IMR-90 (cell line): ENCODE measurements at regions of chr4 and their contacts with region 1.

Region 1: GRCh38 chr4:38856524-38857337 is at the start of gene TLR6:
- DNase-seq: peak; percentile 68
- ATAC-seq: 0 out of 2 replicates have a peak, but pooled peaks have one; percentile 35
- H3K4me3 ChIP-seq: peak within 1 kb of the TSS; percentile 31; the same call in 1 of the 2 replicates
- H3K27ac ChIP-seq: peak within 1 kb of the TSS; percentile 92
- H3K4me1 ChIP-seq: peaks cover 6% of the 10 kb centered on the region
- H3K27me3 ChIP-seq: no peaks in the 10 kb centered on the region
- CTCF ChIP-seq: peak; percentile 68
- POLR2A ChIP-seq: no peak
- RAD21 ChIP-seq: peak; percentile 56
- total RNA-seq, gene TLR6: 3.9 and 4.4 TPM in 2 replicates

Region 2: DNA sequence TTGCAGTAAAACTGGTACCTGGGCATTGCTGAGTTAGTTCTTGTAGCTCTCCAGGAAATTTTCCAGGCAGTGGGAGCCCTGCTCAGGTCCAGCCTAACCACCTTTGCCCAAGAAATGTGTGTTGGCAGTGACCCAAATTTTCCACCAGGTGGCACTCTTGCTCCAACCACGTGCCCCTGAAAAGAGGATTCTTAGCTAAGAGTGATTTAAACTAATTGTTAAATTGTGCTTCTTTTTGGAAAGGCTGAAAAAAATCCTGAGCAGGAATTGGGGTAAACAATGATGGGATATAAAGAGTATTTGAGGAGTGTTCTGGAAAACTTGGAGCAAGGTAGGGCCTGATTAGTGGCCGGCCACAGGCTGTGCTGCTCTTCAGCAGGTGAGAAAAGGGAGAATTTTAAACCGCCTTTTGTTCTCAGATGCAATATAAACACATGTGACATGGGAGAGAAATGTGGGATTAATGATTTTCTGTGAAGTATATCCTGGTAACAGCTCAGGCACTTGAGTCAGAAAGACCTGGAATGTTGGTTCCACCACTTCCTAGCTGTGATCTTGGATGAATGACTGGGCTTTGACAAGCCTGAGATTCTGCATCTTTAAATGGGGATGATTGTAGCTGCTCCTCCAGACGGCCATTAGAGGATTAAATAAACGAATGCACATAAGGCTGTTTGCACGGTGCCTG is 676.9 kb before region 1 on chr4:
- CTCF ChIA-PET with region 1: no interaction called
- POLR2A ChIA-PET with region 1: no interaction called
- dilution Hi-C with region 1: no loop called
- in situ Hi-C with region 1: no loop called
- intact Hi-C with region 1: loop called (anchors 10 kb)
- DNase-seq: peak; percentile 77
- ATAC-seq: peak; percentile 90
- H3K4me3 ChIP-seq: no peak overlapping the region
- H3K27ac ChIP-seq: no peak overlapping the region
- H3K4me1 ChIP-seq: peaks cover 12% of the 10 kb centered on the region
- H3K27me3 ChIP-seq: no peaks in the 10 kb centered on the region
- CTCF ChIP-seq: peak; percentile 85
- POLR2A ChIP-seq: no peak
- RAD21 ChIP-seq: peak; percentile 92

Region 3: DNA sequence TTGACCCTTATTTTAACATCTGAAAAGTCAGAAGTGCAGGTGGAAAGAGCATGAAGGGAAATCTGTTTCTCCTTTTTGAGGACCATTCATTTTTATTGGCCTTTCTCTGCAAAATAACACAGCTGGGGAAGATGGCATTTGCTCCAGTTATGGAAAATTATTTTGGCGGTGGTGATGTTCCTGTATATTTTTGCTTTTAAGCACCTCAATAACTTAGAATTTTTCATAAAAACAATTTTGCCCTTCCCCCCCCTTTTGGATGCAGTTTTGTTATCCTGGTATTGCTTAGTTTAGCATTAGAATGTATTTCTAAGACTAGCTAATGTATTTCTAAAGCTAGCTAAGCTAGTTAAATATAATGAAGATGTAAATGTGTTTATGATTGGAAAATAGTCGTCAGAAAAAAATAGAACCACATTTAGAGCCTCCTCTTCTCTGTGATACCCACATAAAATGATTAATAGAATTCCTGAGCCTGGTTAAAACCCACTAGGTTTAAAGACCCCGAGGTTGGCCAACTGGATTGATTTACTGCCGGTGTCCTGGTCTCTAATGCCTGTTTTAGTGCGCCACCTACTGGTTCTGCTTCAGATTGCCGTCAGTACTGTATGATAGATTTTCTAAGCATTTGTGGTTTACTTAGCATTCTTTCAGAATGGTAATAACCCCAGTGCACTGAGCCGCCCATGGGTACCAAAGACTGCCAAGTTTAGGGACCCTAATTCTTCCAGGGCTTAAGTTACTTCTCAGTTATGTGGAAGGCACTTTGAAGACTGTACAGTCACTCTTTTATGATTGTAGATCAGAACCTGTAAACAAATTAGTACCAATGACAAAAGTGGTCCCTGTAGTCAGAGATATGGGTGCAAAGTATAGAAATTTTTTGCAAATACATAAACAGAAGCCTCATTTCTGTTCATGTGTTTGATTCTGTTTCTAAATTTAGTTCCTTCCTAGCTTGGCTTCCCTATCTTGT is 181.3 kb before region 1 on chr4:
- CTCF ChIA-PET with region 1: no interaction called
- POLR2A ChIA-PET with region 1: no interaction called
- dilution Hi-C with region 1: no loop called
- in situ Hi-C with region 1: no loop called
- intact Hi-C with region 1: loop called (anchors 5 kb)
- DNase-seq: peak; percentile 88
- ATAC-seq: peak; percentile 70
- H3K4me3 ChIP-seq: no peak overlapping the region
- H3K27ac ChIP-seq: no peak overlapping the region
- H3K4me1 ChIP-seq: peaks cover 40% of the 10 kb centered on the region
- H3K27me3 ChIP-seq: no peaks in the 10 kb centered on the region
- CTCF ChIP-seq: peak; percentile 94
- POLR2A ChIP-seq: no peak
- RAD21 ChIP-seq: peak; percentile 98

Region 4: DNA sequence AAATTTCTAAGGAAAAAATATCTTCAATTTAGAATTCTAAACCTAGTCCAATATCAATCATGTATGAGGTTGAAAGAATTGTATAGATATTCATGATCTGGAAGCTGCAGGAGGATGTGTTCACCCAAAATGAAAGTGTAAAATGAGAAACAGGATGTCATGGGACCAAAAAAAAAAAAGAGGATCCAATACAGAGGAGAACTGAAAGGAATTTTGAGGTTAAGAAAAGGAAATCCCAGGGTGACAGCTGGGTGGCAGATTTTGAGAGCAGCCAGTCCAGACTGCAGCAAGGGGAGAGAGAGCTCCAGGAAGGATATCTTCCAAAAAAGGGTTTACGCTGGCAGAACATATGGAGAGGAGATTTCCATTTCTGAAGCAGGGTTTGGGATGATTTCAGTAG is 112.9 kb before region 1 on chr4:
- CTCF ChIA-PET with region 1: no interaction called
- POLR2A ChIA-PET with region 1: no interaction called
- dilution Hi-C with region 1: no loop called
- in situ Hi-C with region 1: no loop called
- intact Hi-C with region 1: no loop called
- DNase-seq: no peak
- ATAC-seq: no peak
- H3K4me3 ChIP-seq: no peak overlapping the region
- H3K27ac ChIP-seq: no peak overlapping the region
- H3K4me1 ChIP-seq: no peaks in the 10 kb centered on the region
- H3K27me3 ChIP-seq: peaks cover 2% of the 10 kb centered on the region
- CTCF ChIP-seq: no peak
- POLR2A ChIP-seq: no peak
- RAD21 ChIP-seq: no peak

Region 5: GRCh38 chr4:38759113-38759789 is 97.5 kb before region 1 on chr4:
- CTCF ChIA-PET with region 1: interaction called, 9 read pairs
- POLR2A ChIA-PET with region 1: no interaction called
- dilution Hi-C with region 1: no loop called
- in situ Hi-C with region 1: loop called (anchors 5 kb)
- intact Hi-C with region 1: loop called (anchors 2 kb)
- DNase-seq: peak; percentile 80
- ATAC-seq: peak; percentile 95
- H3K4me3 ChIP-seq: no peak overlapping the region
- H3K27ac ChIP-seq: no peak overlapping the region
- H3K4me1 ChIP-seq: no peaks in the 10 kb centered on the region
- H3K27me3 ChIP-seq: no peaks in the 10 kb centered on the region
- CTCF ChIP-seq: peak; percentile 83
- POLR2A ChIP-seq: no peak
- RAD21 ChIP-seq: peak; percentile 83

Region 6: DNA sequence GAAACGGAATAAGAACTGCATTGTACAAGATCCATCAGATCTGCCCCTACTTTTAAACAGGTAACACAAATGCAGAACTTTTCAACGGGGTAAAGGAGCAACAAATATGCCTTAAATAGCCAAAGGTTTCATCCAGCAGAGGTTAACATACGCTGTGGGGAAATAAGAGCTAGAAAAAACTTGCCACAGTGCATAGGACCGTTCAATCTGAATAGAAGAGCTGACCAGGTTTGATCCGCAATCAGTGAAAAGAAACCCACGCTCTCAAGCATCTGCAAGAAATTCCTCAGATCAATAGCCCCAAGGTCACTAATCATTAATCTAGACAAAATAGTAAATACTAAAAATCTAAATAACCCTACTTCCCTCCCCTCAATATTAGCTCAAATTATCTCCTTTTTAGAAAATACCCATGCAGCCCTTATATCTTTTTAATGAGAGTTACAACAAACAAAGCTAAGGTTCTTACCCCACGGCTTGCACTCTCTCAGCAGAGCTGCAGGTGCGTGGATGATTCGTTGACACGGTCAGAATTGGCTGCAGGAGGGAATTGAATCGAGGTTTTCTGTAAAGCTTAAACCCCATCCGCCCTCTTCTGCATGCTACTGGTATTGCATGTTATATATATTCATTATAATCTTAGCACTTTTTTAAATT is 74.2 kb before region 1 on chr4 and contains the start of gene TLR10:
- CTCF ChIA-PET with region 1: interaction called, 4 read pairs
- POLR2A ChIA-PET with region 1: no interaction called
- dilution Hi-C with region 1: no loop called
- in situ Hi-C with region 1: no loop called
- intact Hi-C with region 1: loop called (anchors 2 kb)
- DNase-seq: peak; percentile 52
- ATAC-seq: peak; percentile 81
- H3K4me3 ChIP-seq: no peak within 1 kb of the TSS
- H3K27ac ChIP-seq: no peak within 1 kb of the TSS
- H3K4me1 ChIP-seq: no peaks in the 10 kb centered on the region
- H3K27me3 ChIP-seq: peaks cover 4% of the 10 kb centered on the region
- CTCF ChIP-seq: peak; percentile 66
- POLR2A ChIP-seq: no peak
- RAD21 ChIP-seq: peak; percentile 64
- total RNA-seq, gene TLR10: not detected in 2 replicates